ENCODE measurements at regions of chr19 and their contacts with region 1.

Region 1: DNA sequence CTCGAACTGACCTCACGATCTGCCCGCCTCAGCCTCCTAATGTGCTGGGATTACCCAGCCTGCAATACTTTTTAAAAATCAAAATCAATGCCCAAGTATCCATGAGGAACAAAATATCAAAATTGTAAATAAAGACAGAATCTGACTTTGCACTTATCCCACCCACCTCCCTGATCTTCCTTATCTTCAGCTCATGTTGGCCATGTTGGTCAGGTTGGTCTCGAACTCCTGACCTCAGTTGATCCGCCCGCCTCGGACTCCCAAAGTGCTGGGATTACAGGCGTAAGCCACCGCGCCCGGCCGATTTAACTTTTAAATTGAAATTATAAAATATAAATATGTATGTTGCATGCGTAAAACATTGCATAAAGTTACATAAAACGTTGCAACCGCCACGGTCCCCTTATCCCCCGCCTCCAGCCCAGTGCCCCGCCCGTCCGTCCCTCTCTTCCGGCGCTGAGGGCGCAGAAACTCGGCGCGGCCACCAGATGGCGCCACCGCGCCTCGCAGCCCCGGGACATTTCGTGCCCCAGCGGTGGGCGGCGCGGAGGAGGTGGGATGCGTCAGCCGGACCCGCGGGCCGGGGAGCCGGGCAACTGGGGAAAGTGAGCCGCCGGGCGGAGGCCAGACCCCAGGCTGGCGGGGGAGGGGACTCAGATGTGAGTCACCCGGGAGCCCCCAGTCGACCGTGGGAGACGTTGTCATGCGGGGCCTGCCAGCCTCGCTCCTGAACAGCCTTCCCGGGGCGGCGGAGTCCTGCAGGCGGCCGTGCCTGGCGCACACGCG is 1.5 kb upstream of the GADD45B start:
- DNase-seq: peak; percentile 97
- H3K4me3 ChIP-seq: peak overlapping the region; percentile 100
- H3K27ac ChIP-seq: peak overlapping the region; percentile 93
- H3K4me1 ChIP-seq: peaks cover 5% of the 10 kb centered on the region
- H3K27me3 ChIP-seq: no peaks in the 10 kb centered on the region

Region 2: GRCh38 chr19:2610637-2611482 is 136.4 kb after region 1 on chr19:
- in situ Hi-C with region 1: loop called (anchors 5 kb)
- DNase-seq: peak; percentile 98
- H3K4me3 ChIP-seq: peak overlapping the region; percentile 31
- H3K27ac ChIP-seq: peak overlapping the region; percentile 50
- H3K4me1 ChIP-seq: no peaks in the 10 kb centered on the region
- H3K27me3 ChIP-seq: no peaks in the 10 kb centered on the region

Region 3: GRCh38 chr19:3084943-3085342 is 610.5 kb after region 1 on chr19:
- in situ Hi-C with region 1: no loop called
- DNase-seq: no peak
- H3K4me3 ChIP-seq: no peak overlapping the region
- H3K27ac ChIP-seq: no peak overlapping the region
- H3K4me1 ChIP-seq: no peaks in the 10 kb centered on the region
- H3K27me3 ChIP-seq: no peaks in the 10 kb centered on the region

Measured in GM23248 (cell line).